ENCODE measurements at regions of chr19 and their contacts with region 1.

Region 1: DNA sequence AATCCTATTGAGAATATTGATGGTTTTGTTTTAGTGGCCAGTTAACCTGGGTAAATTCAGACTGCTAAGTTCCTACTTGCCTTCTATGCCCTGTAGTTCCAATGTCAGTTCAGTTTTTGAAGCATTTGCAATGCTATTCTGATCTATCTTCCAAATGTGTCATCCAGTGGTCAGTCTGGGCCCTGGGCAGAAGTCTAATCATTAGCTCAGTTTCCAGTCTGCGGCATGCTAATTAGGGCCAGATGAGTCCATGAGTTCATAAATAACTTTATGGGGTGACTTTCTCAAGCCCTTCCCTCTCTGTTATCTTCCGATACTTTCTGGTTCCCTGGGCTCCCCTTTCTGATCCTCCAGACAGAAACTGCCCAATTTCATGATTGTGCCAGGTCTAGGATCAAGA is 32.7 kb downstream of the FAM187B start:
- DNase-seq: no peak
- ATAC-seq: no peak
- H3K4me3 Mint-ChIP-seq: no peak overlapping the region
- H3K27ac Mint-ChIP-seq: no peak overlapping the region
- H3K4me1 Mint-ChIP-seq: peaks cover 13% of the 10 kb centered on the region
- H3K27me3 Mint-ChIP-seq: no peaks in the 10 kb centered on the region
- CTCF ChIP-seq: no peak

Region 2: DNA sequence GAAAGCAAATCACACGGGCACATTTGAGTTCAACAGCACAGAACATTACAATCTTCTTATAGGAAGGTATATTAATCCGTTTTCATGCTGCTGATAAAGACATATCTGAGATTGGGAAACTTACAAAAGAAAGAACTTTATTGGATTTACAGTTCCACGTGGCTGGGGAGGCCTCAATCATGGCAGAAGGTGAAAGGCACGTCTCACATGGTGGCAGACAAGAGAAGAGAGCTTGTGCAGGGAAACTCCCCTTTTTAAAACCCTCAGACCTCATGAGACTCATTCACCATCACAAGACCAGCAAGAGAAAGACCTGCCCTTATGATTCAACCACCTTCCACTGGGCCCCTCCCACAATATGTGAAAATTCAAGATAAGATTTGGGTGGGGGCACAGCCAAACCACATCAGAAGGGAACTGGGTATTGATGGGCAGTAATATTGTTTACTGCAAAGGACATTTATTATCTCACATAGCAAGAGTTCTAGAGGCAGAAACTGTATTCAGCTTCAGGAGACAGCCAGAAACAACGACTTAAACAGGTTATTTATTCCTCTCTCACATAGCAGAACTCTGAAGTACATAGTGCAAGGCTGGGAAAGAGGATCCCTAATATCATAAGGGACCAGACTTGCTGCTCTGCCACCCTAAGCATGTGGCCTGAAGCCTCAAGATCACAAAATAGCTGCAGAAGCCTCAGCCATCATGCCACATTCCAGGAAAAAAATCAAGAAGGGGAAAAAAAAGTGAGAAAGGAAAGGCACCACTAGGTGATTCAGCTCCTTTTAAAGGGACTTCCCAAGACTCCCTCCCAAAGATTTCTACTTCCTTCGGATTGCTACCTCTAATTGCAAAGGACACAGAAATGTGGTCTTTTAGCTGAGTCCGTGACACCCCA is 18.2 kb before region 1 on chr19:
- CTCF ChIA-PET with region 1: interaction called, 10 read pairs
- POLR2A ChIA-PET with region 1: interaction called, 4 read pairs
- intact Hi-C with region 1: no loop called
- DNase-seq: no peak
- ATAC-seq: peak; percentile 39
- H3K4me3 Mint-ChIP-seq: no peak overlapping the region
- H3K27ac Mint-ChIP-seq: no peak overlapping the region
- H3K4me1 Mint-ChIP-seq: peaks cover 29% of the 10 kb centered on the region
- H3K27me3 Mint-ChIP-seq: no peaks in the 10 kb centered on the region
- CTCF ChIP-seq: no peak